ENCODE measurements at regions of chr3 and their contacts with region 1.

Region 1: GRCh38 chr3:50611464-50612233 is at the start of gene CISH:
- DNase-seq: peak; percentile 99
- H3K4me3 Mint-ChIP-seq: peak within 1 kb of the TSS; percentile 96
- H3K27ac Mint-ChIP-seq: peak within 1 kb of the TSS; percentile 100
- H3K4me1 Mint-ChIP-seq: peaks cover 36% of the 10 kb centered on the region
- H3K27me3 Mint-ChIP-seq: no peaks in the 10 kb centered on the region
- total RNA-seq, gene CISH: 136 to 138 TPM

Region 2: DNA sequence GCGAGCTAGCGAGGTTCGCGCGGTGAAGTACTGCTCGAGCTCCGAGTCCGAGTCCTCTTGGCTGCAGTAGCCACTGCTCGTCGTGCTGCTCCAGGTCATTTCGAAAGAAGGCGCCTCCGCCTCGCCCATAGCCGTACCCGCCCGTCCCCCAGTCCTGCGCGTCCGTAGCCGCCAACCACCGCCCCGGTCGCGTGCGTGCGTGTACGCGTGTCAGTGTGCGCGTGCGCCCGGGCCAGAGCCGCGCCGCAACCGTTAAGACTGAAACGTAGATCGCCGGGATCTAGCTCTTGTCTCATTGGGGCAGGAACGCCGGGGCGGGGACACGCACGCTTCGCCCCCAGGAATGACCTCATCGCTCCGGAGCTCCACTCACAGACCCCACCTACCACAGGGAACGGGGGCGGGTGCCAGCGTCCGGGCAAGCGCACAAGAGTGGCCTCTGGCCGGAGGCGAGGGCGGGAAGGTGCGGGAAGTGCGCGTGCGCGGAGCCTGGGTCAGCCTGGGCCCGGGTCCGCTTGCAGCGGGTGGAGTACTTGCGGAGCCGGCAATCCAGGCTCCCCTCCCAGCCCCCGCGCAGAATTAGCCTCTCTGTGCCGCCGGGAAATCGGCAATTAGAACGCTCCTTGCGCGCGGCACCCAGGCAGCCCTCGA is 274.3 kb before region 1 on chr3:
- CTCF ChIA-PET with region 1: interaction called, 3 read pairs
- intact Hi-C with region 1: loop called (anchors 2 kb)
- DNase-seq: peak; percentile 99
- H3K4me3 Mint-ChIP-seq: peak overlapping the region; percentile 94
- H3K27ac Mint-ChIP-seq: peak overlapping the region; percentile 94
- H3K4me1 Mint-ChIP-seq: peaks cover 57% of the 10 kb centered on the region
- H3K27me3 Mint-ChIP-seq: no peaks in the 10 kb centered on the region

Region 3: GRCh38 chr3:50405249-50405648 is 206.4 kb before region 1 on chr3:
- CTCF ChIA-PET with region 1: no interaction called
- intact Hi-C with region 1: no loop called
- DNase-seq: peak; percentile 66
- H3K4me3 Mint-ChIP-seq: no peak overlapping the region
- H3K27ac Mint-ChIP-seq: no peak overlapping the region
- H3K4me1 Mint-ChIP-seq: no peaks in the 10 kb centered on the region
- H3K27me3 Mint-ChIP-seq: no peaks in the 10 kb centered on the region

Region 4: DNA sequence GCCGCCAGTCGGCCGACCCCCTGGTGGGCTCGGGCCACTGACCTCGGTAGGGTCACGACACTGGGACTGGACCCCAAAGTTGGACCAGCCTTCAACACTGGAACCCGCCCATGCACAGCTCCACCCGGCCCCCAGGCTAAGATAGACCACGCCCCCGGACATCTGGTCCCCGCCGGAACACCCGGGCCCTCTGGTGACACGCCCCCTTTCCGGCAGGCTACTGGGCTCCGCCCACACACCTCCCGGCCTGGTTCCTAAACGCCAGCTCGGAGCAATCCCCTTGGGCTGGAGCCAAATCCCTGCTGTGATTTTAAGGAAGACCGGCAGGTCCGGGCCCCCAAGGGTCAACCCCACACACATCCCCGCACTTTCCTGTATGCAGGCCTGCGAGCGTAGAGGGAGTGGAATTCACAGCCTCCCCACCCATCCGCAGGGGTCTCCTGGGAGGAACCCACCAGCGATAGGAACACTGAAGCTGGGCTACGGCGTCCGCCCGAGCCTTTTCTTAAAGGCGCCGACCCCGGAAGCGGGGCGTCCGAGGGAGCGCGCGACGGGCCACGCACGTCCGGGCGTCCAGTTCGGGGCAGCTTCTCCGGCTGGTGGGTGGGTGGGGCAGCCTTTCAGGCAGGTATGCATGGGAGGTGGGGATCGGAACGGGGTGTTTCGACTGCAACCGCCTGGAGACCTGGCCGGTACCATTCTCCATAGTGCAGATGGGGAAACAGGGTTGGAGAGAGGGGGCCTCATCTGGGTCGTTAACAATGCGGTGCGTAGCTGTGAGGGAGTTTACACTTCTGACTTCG is 42.5 kb before region 1 on chr3 and contains the start of gene HEMK1:
- CTCF ChIA-PET with region 1: interaction called, 376 read pairs
- intact Hi-C with region 1: loop called (anchors 1 kb)
- DNase-seq: peak; percentile 97
- H3K4me3 Mint-ChIP-seq: peak within 1 kb of the TSS; percentile 98
- H3K27ac Mint-ChIP-seq: peak within 1 kb of the TSS; percentile 95
- H3K4me1 Mint-ChIP-seq: peaks cover 55% of the 10 kb centered on the region
- H3K27me3 Mint-ChIP-seq: no peaks in the 10 kb centered on the region
- total RNA-seq, gene HEMK1: 27.0 to 30.4 TPM

Region 5: DNA sequence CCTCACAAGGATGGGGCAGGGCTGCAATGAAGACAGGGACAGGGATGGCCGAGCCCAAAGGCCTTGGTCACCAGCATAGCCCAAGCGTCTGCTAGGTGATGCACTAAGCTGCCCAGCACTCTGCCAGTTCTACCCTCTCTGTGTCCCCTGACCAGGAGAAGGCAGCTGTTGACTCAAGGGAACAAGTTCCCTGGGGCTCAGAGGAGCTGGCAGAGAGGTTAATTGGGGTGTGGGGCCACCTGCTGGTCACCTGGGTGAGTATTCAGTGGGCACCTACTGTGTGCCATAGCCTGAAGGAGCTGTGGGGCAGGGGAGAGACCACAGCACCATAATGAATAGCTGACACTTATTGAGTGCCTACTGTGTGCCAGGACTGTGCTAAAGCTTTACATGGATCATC is 41.1 kb after region 1 on chr3:
- CTCF ChIA-PET with region 1: interaction called, 148 read pairs
- intact Hi-C with region 1: loop called (anchors 1 kb)
- DNase-seq: peak; percentile 84
- H3K4me3 Mint-ChIP-seq: no peak overlapping the region
- H3K27ac Mint-ChIP-seq: no peak overlapping the region
- H3K4me1 Mint-ChIP-seq: peaks cover 22% of the 10 kb centered on the region
- H3K27me3 Mint-ChIP-seq: no peaks in the 10 kb centered on the region

Region 6: DNA sequence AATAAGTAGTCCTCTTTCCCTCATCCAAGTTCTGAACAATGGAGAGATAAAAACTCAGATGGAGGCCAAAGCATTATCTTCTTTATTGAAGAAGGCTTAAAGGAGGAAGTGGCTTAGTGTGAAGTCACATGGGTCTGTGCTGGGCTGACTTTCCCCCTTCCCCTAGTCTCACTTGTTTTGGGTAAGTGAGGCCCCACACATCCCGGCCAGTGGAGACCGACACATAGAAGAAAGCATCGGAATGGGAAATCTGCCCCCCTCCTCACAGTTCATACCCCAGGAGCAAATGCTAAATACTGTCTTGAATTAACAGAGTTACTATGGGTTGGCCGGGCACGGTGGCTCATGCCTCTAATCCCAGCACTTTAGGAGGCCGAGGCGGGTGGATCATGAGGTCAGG is 54.0 kb after region 1 on chr3:
- CTCF ChIA-PET with region 1: no interaction called
- intact Hi-C with region 1: no loop called
- DNase-seq: no peak
- H3K4me3 Mint-ChIP-seq: no peak overlapping the region
- H3K27ac Mint-ChIP-seq: no peak overlapping the region
- H3K4me1 Mint-ChIP-seq: peaks cover 19% of the 10 kb centered on the region
- H3K27me3 Mint-ChIP-seq: peaks cover 6% of the 10 kb centered on the region

Region 7: GRCh38 chr3:51371943-51372557 is 760.4 kb after region 1 on chr3:
- CTCF ChIA-PET with region 1: interaction called, 5 read pairs
- intact Hi-C with region 1: loop called (anchors 1 kb)
- DNase-seq: peak; percentile 78
- H3K4me3 Mint-ChIP-seq: no peak overlapping the region
- H3K27ac Mint-ChIP-seq: no peak overlapping the region
- H3K4me1 Mint-ChIP-seq: peaks cover 2% of the 10 kb centered on the region
- H3K27me3 Mint-ChIP-seq: no peaks in the 10 kb centered on the region

Region 8: DNA sequence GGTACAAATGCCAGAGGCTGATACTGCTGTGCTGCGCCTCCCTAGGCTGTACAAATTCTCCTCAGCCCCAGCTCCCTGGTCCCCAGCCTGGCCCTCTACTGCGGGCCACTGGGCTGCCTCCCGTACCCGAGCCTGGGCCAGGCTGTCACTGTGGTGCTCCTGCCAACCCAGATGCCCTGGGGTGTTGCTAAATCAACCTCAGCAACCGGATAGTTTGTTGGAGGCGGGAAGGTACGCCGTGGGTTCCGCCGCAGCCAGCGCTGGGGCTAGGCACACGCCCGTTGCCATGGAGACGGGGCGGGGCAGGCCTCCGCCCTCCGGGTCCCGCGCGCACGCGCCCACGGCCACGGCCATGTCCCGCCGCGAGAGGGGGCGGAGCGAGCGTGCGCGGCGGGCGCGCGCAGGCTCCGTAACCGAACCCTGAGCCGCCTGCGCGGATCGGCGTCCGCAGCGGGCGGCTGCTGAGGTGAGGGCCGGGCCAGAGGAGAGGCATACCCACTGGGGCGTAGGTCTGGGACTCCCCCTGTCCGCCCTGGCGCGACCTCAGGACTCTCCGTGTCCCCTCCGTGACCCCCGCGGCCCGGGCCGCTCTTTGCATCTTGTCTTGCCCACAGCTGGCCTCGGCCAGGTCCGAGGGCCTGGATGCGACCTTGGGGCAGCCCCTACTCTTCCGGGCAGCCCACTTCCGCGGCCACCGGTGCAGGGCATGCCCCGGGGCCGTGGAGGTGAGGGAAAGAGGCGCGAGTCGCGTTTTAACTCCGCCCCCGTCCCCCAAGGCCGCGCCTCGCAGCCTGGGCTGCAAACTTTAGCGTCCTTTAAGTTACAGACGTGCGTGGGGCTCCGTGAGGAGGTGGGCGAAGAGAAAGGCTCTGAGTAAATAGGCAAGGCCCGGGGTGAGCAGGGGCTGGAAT is 1059.4 kb after region 1 on chr3 and contains the start of gene TEX264:
- CTCF ChIA-PET with region 1: no interaction called
- intact Hi-C with region 1: loop called (anchors 2 kb)
- DNase-seq: peak; percentile 85
- H3K4me3 Mint-ChIP-seq: peak within 1 kb of the TSS; percentile 85
- H3K27ac Mint-ChIP-seq: peak within 1 kb of the TSS; percentile 66
- H3K4me1 Mint-ChIP-seq: peaks cover 61% of the 10 kb centered on the region
- H3K27me3 Mint-ChIP-seq: no peaks in the 10 kb centered on the region
- total RNA-seq, gene TEX264: 23.7 to 26.6 TPM